ENCODE measurements at regions of chr10 and their contacts with region 1.

Region 1: GRCh38 chr10:69786791-69787190 is 14.9 kb upstream of the COL13A1 start:
- DNase-seq: no peak
- H3K4me3 Mint-ChIP-seq: no peak overlapping the region
- H3K27ac Mint-ChIP-seq: no peak overlapping the region
- H3K4me1 Mint-ChIP-seq: no peaks in the 10 kb centered on the region
- H3K27me3 Mint-ChIP-seq: peaks cover 4% of the 10 kb centered on the region

Region 2: DNA sequence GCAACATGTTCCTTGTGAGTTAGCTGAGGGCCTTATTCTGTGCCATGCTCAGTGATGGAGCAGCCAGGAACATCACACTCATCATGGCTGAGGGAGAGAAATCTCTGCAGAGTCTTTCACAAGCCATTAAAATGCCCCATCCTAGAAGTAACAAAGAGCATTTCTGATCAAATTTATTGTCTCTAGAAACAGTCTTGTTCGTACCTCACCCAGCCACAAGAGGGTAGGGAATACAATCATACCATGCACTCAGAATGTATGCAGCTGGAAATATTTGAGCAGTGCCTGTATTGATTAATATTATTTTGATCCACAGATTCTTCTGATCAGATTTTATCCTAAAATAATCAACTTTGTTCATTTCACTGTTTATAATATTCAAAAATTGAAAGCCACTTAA is 645.5 kb before region 1 on chr10:
- intact Hi-C with region 1: no loop called
- DNase-seq: no peak
- H3K4me3 Mint-ChIP-seq: no peak overlapping the region
- H3K27ac Mint-ChIP-seq: no peak overlapping the region
- H3K4me1 Mint-ChIP-seq: peaks cover 7% of the 10 kb centered on the region
- H3K27me3 Mint-ChIP-seq: no peaks in the 10 kb centered on the region

Region 3: DNA sequence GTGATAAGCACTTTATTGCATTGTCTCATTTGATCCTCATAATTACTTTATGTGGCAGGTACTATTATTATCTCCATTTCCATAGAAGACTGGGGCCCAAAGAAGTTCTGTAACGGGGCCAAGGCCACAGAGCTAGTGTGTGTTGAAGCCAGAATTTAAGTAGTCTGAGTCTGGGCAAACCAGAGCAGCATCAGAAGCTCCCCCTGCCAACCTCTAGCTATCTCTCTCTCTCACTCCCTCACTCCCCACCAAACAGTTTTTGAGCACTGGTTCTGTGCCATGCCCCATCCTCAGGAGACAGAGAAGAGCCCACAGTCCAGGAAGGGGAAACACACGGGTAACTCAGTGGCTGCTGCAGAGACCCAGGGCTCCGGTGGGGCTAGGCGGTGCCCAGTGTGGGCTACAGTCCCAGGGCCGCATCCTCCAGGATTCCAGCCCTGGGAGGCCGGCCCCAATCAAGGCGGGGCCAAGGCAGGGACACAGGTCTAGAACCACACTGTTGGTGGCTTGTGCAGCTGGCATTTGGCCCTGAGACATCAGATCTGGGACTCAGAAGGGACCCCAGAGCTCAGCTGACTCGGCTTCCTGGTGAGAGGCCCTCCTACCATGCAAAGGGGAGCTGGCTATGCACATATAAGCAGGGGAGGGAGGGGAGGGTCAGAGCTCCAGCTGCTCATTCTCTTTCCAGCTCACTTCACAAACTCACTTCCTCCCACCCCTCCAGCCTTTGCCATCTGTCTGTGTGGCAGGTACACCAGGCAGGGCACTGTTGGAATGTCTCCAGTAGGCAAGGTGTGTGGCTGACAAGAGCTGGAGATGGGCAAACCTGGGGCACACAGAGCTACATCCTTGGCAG is 49.3 kb after region 1 on chr10:
- intact Hi-C with region 1: no loop called
- DNase-seq: no peak
- H3K4me3 Mint-ChIP-seq: no peak overlapping the region
- H3K27ac Mint-ChIP-seq: no peak overlapping the region
- H3K4me1 Mint-ChIP-seq: no peaks in the 10 kb centered on the region
- H3K27me3 Mint-ChIP-seq: peaks cover 8% of the 10 kb centered on the region

Region 4: GRCh38 chr10:69901628-69902505 is 115.1 kb after region 1 on chr10:
- intact Hi-C with region 1: no loop called
- DNase-seq: peak; percentile 57
- H3K4me3 Mint-ChIP-seq: no peak overlapping the region
- H3K27ac Mint-ChIP-seq: no peak overlapping the region
- H3K4me1 Mint-ChIP-seq: no peaks in the 10 kb centered on the region
- H3K27me3 Mint-ChIP-seq: peaks cover 2% of the 10 kb centered on the region

Region 5: DNA sequence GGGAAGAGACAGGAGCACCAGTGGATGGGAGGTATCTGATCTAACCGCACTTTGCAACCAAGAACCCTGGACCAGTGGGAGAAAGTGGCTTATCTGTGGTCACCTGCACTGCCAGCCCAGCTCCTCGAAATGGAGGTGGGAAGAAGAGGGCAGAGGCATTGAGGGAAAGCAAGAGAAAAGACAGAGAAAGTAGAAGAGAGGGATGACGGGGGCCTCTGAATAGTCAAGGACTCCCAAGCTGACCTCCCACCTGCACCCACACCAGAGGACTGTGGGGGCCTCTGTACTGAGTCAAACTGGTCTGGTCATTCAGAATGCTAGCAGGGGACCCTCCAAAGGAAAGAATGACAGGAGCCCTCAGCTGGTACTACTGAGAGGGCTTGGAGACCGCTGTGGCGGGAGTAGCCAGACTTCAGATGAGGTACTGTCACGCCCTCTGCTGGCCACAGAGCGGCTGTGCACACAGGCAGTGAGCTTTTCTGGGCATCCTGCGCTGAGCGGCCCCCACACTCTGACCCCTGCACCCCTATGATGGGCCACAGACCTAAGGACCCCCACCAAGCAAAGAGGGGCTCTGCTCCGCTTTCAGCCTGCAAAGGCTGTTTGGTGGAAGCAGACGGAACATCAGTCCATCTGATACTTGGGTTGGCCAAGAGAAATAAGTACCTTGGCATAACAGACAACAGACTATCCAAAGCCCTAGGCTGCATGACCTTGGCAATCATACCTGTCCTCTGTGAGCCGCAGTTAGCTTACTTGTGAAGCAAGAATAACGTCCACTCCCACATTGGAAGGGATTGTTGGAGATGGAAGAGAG is 127.8 kb after region 1 on chr10:
- intact Hi-C with region 1: loop called (anchors 2 kb)
- DNase-seq: peak; percentile 86
- H3K4me3 Mint-ChIP-seq: no peak overlapping the region
- H3K27ac Mint-ChIP-seq: no peak overlapping the region
- H3K4me1 Mint-ChIP-seq: no peaks in the 10 kb centered on the region
- H3K27me3 Mint-ChIP-seq: peaks cover 7% of the 10 kb centered on the region